SK-N-SH (cell line): ENCODE measurements at regions of chr10 and their contacts with region 1.

Region 1: DNA sequence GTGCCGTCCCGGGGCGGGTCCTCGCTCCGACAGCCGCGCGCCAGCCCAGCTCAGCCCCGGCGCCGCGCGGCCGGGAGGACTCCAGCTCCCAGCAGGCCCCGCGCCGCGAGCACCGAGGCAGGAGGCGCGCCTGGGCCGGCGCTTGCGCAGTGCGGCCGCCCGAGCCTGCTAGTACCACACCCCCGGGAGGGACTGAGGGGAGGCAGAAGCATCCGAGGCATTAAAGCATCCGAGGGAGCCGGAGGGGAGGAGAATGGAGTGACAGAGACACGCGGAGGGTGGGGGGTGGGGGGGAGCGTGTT is at the start of gene GRK5:
- DNase-seq: peak; percentile 98
- H3K4me3 ChIP-seq: peak within 1 kb of the TSS; percentile 91
- H3K27ac ChIP-seq: peak within 1 kb of the TSS; percentile 67 to 98
- H3K4me1 ChIP-seq: peaks cover 30 to 32% of the 10 kb centered on the region in 2 experiments
- H3K27me3 ChIP-seq: no peaks in the 10 kb centered on the region
- CTCF ChIP-seq: no peak
- EP300 ChIP-seq: no peak
- RAD21 ChIP-seq: no peak
- polyA plus RNA-seq, gene GRK5: 9.5 and 12.1 TPM in 2 replicates

Region 2: GRCh38 chr10:119250641-119251314 is 43.5 kb after region 1 on chr10:
- CTCF ChIA-PET with region 1: interaction called, 13 read pairs
- POLR2A ChIA-PET with region 1: interaction called, 3 read pairs
- DNase-seq: no peak
- H3K4me3 ChIP-seq: peak overlapping the region in 1 of 2 experiments; percentile 18; a peak in 1 of 4 replicates
- H3K27ac ChIP-seq: peak overlapping the region; percentile 80 to 98
- H3K4me1 ChIP-seq: peaks cover 57 to 62% of the 10 kb centered on the region in 2 experiments
- H3K27me3 ChIP-seq: no peaks in the 10 kb centered on the region
- CTCF ChIP-seq: no peak
- EP300 ChIP-seq: peak; percentile 4 to 62; a peak in 1 of 4 replicates
- RAD21 ChIP-seq: no peak

Region 3: DNA sequence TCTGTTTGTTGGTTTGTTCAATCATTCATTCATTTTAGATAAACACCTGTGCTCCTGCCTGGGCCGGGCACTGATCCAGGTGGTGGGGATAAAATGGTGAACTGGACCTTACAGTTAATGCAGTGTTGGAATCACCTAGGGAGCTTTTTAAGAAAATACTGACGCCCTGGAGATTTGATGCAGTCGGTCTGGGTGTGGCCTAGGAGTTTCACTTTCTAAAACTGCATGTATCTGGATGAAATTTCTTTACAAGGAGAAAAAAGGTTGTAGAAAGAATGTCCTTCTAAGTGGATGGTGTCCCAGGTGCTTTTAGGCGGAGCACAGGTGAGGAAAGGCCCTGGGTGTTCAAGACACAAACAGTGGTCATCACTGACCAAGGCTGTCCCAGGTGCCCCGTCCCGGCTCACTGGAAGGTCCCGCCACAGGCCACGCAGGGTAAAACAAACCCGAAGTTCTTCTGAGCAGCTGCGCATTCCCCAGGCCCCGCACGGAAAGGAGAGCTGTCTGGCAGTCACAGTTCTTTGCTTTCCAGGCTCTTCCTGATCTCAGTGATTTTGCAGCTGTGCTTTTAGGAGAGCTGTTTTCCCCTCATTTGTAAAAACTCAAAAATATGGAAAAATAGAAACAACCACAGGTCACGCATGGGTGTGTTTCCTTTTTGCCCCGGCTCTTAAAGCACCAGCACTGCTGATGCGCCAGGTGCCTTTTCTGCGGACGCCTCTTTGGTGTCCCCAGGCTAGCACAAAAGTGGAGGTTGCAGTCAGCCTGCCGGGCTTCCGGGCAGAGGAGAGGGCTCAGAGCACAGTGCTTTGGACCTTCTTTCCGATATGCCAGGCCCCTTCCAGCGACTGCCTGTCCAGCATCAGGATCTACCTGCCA is 161.9 kb after region 1 on chr10:
- CTCF ChIA-PET with region 1: interaction called, 23 read pairs
- POLR2A ChIA-PET with region 1: interaction called, 3 read pairs
- DNase-seq: no peak
- H3K4me3 ChIP-seq: no peak overlapping the region
- H3K27ac ChIP-seq: no peak overlapping the region
- H3K4me1 ChIP-seq: peaks cover 15 to 62% of the 10 kb centered on the region in 2 experiments
- H3K27me3 ChIP-seq: no peaks in the 10 kb centered on the region
- CTCF ChIP-seq: no peak
- EP300 ChIP-seq: no peak
- RAD21 ChIP-seq: no peak

Region 4: GRCh38 chr10:119421887-119422681 is 214.8 kb after region 1 on chr10:
- CTCF ChIA-PET with region 1: interaction called, 119 read pairs
- POLR2A ChIA-PET with region 1: interaction called, 4 read pairs
- DNase-seq: peak; percentile 91
- H3K4me3 ChIP-seq: no peak overlapping the region
- H3K27ac ChIP-seq: peak overlapping the region in 1 of 2 experiments; percentile 53; a peak in 2 of 4 replicates
- H3K4me1 ChIP-seq: peaks cover 0 to 40% of the 10 kb centered on the region in 2 experiments; a peak in 1 of 4 replicates
- H3K27me3 ChIP-seq: no peaks in the 10 kb centered on the region
- CTCF ChIP-seq: no peak
- EP300 ChIP-seq: peak in 1 of 2 experiments; percentile 56; a peak in 1 of 4 replicates
- RAD21 ChIP-seq: no peak